ENCODE measurements at regions of chr18 and their contacts with region 1.

Region 1: GRCh38 chr18:48777026-48777743 is 173.6 kb downstream of the SMAD7 start:
- DNase-seq: peak; percentile 64 to 75 (median 70)
- H3K4me3 ChIP-seq: no peak overlapping the region
- H3K4me3 Mint-ChIP-seq: no peak overlapping the region
- H3K27ac ChIP-seq: no peak overlapping the region
- H3K27ac Mint-ChIP-seq: peak overlapping the region in 1 of 7 donors; percentile 74
- H3K4me1 ChIP-seq: peaks cover 10% of the 10 kb centered on the region
- H3K4me1 Mint-ChIP-seq: peaks cover 4 to 18% (median 5%) of the 10 kb centered on the region in 4 donors
- H3K27me3 ChIP-seq: no peaks in the 10 kb centered on the region
- H3K27me3 Mint-ChIP-seq: no peaks in the 10 kb centered on the region

Region 2: GRCh38 chr18:48842259-48843061 is 65.3 kb after region 1 on chr18:
- CTCF ChIA-PET with region 1: interaction called, 11 read pairs
- POLR2A ChIA-PET with region 1: no interaction called
- intact Hi-C with region 1: loop called (anchors 1 kb)
- DNase-seq: peak; percentile 77 to 83 (median 78)
- H3K4me3 ChIP-seq: peak overlapping the region in 1 of 2 donors; percentile 34
- H3K4me3 Mint-ChIP-seq: peak overlapping the region; percentile 43 to 87 (median 74)
- H3K27ac ChIP-seq: peak overlapping the region; percentile 62
- H3K27ac Mint-ChIP-seq: peak overlapping the region; percentile 94 to 99 (median 97)
- H3K4me1 ChIP-seq: peaks cover 85% of the 10 kb centered on the region
- H3K4me1 Mint-ChIP-seq: peaks cover 68 to 84% (median 77%) of the 10 kb centered on the region in 4 donors
- H3K27me3 ChIP-seq: no peaks in the 10 kb centered on the region
- H3K27me3 Mint-ChIP-seq: no peaks in the 10 kb centered on the region

Region 3: GRCh38 chr18:48975649-48976204 is 198.5 kb after region 1 on chr18:
- CTCF ChIA-PET with region 1: no interaction called
- POLR2A ChIA-PET with region 1: no interaction called
- intact Hi-C with region 1: loop called (anchors 5 kb)
- DNase-seq: peak; percentile 47 to 58 (median 49)
- H3K4me3 ChIP-seq: peak overlapping the region in 1 of 2 donors; percentile 57
- H3K4me3 Mint-ChIP-seq: peak overlapping the region in 2 of 8 donors; percentile 36
- H3K27ac ChIP-seq: peak overlapping the region; percentile 6
- H3K27ac Mint-ChIP-seq: no peak overlapping the region
- H3K4me1 ChIP-seq: peaks cover 4% of the 10 kb centered on the region
- H3K4me1 Mint-ChIP-seq: peaks cover 7 to 15% (median 11%) of the 10 kb centered on the region in 4 donors
- H3K27me3 ChIP-seq: no peaks in the 10 kb centered on the region
- H3K27me3 Mint-ChIP-seq: peaks cover 6 to 9% of the 10 kb centered on the region in 2 donors

Region 4: DNA sequence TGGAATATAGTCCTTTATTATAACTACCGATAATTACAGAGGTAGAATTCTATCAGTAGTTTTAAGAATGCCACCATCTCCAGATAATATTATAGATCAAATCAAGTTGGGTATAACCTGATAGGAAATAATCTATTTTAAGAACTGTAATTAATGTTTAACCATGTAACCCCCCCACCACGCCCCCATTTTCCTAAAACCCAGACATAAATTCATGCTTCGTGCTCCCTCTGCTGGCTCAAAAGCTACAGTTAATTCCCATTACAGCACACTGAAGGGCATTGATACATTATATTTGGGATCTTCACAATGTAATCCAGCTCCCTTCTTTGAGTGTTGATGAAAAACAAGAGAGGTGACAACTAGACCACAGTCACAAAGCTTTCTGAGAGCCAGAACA is 401.6 kb after region 1 on chr18:
- CTCF ChIA-PET with region 1: interaction called, 6 read pairs
- POLR2A ChIA-PET with region 1: no interaction called
- intact Hi-C with region 1: loop called (anchors 1 kb)
- DNase-seq: no peak
- H3K4me3 ChIP-seq: no peak overlapping the region
- H3K4me3 Mint-ChIP-seq: no peak overlapping the region
- H3K27ac ChIP-seq: no peak overlapping the region
- H3K27ac Mint-ChIP-seq: no peak overlapping the region
- H3K4me1 ChIP-seq: no peaks in the 10 kb centered on the region
- H3K4me1 Mint-ChIP-seq: peaks cover 7 to 20% (median 13%) of the 10 kb centered on the region in 4 donors
- H3K27me3 ChIP-seq: no peaks in the 10 kb centered on the region
- H3K27me3 Mint-ChIP-seq: no peaks in the 10 kb centered on the region

Region 5: GRCh38 chr18:49447810-49448745 is 670.9 kb after region 1 on chr18:
- CTCF ChIA-PET with region 1: interaction called, 7 read pairs
- POLR2A ChIA-PET with region 1: no interaction called
- intact Hi-C with region 1: loop called (anchors 1 kb)
- DNase-seq: peak; percentile 41 to 66 (median 52)
- H3K4me3 ChIP-seq: no peak overlapping the region
- H3K4me3 Mint-ChIP-seq: no peak overlapping the region
- H3K27ac ChIP-seq: no peak overlapping the region
- H3K27ac Mint-ChIP-seq: peak overlapping the region in 3 of 7 donors; percentile 20 to 43 (median 34)
- H3K4me1 ChIP-seq: no peaks in the 10 kb centered on the region
- H3K4me1 Mint-ChIP-seq: peaks cover 14 to 26% (median 21%) of the 10 kb centered on the region in 4 donors
- H3K27me3 ChIP-seq: no peaks in the 10 kb centered on the region
- H3K27me3 Mint-ChIP-seq: no peaks in the 10 kb centered on the region